MCF 10A (cell line): ENCODE measurements at regions of chr13 and their contacts with region 1.

Region 1: DNA sequence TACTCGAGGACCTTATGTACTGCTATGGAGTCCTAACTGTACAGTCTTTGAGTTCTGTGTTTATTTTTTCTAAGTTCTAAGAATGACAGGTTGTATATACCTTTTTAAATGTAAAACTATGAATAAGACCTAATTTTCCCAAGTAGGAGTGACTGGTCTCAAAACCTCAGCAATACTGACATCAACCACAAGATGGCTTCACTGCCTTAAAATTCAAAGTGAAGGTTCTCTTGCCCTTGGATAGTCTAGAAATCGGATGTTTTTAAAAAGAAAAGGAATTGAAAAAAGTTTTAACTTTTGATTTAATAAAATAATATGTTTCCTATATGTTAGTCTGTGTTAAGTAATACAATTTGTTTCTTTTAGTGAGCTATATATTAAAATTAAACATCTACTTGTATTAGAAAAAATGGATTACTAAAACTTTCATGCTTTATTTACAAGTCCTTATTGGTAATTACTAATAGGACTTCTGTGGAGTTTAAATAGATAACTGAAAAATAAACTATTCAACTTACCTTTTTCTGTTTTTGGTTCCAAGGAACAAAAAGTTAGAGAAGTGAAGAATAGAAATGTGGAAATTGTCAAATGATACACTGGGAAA is 52.0 kb downstream of the TDRD3 start:
- DNase-seq: peak; percentile 59
- H3K4me3 Mint-ChIP-seq: no peak overlapping the region
- H3K27ac Mint-ChIP-seq: no peak overlapping the region
- H3K4me1 Mint-ChIP-seq: no peaks in the 10 kb centered on the region
- H3K27me3 Mint-ChIP-seq: no peaks in the 10 kb centered on the region
- CTCF ChIP-seq: peak; percentile 57

Region 2: DNA sequence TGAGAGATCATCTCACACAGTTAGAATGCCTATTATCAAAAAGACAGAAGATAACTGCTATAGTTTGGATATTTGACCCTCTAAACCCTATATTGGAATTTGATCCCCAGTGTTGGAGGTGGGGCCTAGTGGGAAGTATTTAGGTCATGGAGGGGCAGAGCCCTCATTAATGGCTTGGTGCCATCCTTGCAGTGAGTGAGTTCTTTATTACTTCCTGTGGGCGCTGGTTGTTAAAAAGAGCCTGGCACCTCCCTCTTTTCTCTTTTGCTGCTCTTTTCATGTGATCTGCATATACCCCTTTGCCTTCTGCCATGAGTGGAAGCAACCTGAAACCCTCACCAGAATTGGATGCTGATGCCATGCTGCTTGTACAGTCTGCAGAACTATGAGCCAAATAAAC is 14.8 kb after region 1 on chr13:
- CTCF ChIA-PET with region 1: interaction called, 35 read pairs
- POLR2A ChIA-PET with region 1: interaction called, 3 read pairs
- intact Hi-C with region 1: no loop called
- DNase-seq: no peak
- H3K4me3 Mint-ChIP-seq: no peak overlapping the region
- H3K27ac Mint-ChIP-seq: no peak overlapping the region
- H3K4me1 Mint-ChIP-seq: no peaks in the 10 kb centered on the region
- H3K27me3 Mint-ChIP-seq: no peaks in the 10 kb centered on the region
- CTCF ChIP-seq: no peak

Region 3: GRCh38 chr13:60617991-60618733 is 169.2 kb after region 1 on chr13:
- CTCF ChIA-PET with region 1: interaction called, 11 read pairs
- POLR2A ChIA-PET with region 1: no interaction called
- intact Hi-C with region 1: loop called (anchors 1 kb)
- DNase-seq: peak; percentile 34
- H3K4me3 Mint-ChIP-seq: no peak overlapping the region
- H3K27ac Mint-ChIP-seq: no peak overlapping the region
- H3K4me1 Mint-ChIP-seq: no peaks in the 10 kb centered on the region
- H3K27me3 Mint-ChIP-seq: peaks cover 87% of the 10 kb centered on the region
- CTCF ChIP-seq: peak; percentile 21

Region 4: DNA sequence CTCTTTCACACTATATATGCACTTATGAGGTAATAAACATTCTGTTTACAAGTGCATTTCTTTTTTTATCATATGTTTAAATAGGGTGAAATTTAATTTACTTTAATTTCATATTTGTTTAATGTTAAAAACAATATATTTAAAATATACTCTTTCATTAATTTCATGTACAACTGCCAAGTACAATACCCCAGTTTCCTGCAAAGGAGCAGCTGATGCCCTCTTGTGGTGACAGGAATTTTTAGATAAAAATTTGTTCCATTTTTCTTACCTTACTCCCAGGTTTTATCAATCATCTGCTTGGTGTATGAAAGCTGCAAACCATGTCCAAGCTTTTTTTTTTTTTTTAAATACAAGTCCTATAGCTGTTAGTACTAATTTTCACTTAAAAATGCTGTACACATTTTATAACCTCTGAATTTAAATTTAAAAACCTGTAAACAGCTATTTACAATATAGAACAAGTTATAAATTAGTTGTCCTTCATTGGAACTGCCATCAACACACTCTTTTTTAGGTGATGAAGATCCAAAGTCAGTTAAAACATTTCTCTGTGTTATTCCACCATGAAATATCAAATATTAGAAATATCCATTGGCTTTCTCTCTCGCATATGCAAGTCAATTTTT is 961.8 kb after region 1 on chr13:
- CTCF ChIA-PET with region 1: interaction called, 14 read pairs
- POLR2A ChIA-PET with region 1: no interaction called
- intact Hi-C with region 1: loop called (anchors 10 kb)
- DNase-seq: peak; percentile 24
- H3K4me3 Mint-ChIP-seq: no peak overlapping the region
- H3K27ac Mint-ChIP-seq: no peak overlapping the region
- H3K4me1 Mint-ChIP-seq: peaks cover 9% of the 10 kb centered on the region
- H3K27me3 Mint-ChIP-seq: peaks cover 53% of the 10 kb centered on the region
- CTCF ChIP-seq: peak; percentile 43

Region 5: GRCh38 chr13:61685682-61686012 is 1236.6 kb after region 1 on chr13:
- CTCF ChIA-PET with region 1: interaction called, 9 read pairs
- POLR2A ChIA-PET with region 1: no interaction called
- intact Hi-C with region 1: loop called (anchors 10 kb)
- DNase-seq: peak; percentile 46
- H3K4me3 Mint-ChIP-seq: no peak overlapping the region
- H3K27ac Mint-ChIP-seq: no peak overlapping the region
- H3K4me1 Mint-ChIP-seq: no peaks in the 10 kb centered on the region
- H3K27me3 Mint-ChIP-seq: no peaks in the 10 kb centered on the region
- CTCF ChIP-seq: peak; percentile 13

Region 6: DNA sequence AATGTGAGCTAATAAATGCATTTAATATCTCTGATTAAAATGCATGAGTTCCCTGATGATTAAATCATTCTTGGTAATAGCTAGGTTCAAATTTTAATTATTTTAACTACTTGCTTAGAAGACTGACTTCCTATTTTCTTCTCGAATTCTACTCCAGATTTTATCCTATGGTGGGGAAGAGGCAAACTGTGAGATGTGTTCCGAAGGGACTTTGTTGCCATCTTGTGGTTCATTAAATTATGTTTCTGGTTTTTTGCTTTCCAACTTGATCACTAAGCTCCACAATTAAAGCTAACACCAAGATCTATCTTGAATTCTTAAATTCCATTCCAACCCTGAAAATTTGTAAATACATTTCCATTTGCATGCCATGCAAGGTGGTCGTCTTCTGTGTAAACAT is 1505.1 kb after region 1 on chr13:
- CTCF ChIA-PET with region 1: interaction called, 8 read pairs
- POLR2A ChIA-PET with region 1: no interaction called
- intact Hi-C with region 1: loop called (anchors 2 kb)
- DNase-seq: peak; percentile 52
- H3K4me3 Mint-ChIP-seq: no peak overlapping the region
- H3K27ac Mint-ChIP-seq: no peak overlapping the region
- H3K4me1 Mint-ChIP-seq: no peaks in the 10 kb centered on the region
- H3K27me3 Mint-ChIP-seq: peaks cover 23% of the 10 kb centered on the region
- CTCF ChIP-seq: peak; percentile 45